AG04450 (cell line): ENCODE measurements at regions of chr9 and their contacts with region 1.

Region 1: DNA sequence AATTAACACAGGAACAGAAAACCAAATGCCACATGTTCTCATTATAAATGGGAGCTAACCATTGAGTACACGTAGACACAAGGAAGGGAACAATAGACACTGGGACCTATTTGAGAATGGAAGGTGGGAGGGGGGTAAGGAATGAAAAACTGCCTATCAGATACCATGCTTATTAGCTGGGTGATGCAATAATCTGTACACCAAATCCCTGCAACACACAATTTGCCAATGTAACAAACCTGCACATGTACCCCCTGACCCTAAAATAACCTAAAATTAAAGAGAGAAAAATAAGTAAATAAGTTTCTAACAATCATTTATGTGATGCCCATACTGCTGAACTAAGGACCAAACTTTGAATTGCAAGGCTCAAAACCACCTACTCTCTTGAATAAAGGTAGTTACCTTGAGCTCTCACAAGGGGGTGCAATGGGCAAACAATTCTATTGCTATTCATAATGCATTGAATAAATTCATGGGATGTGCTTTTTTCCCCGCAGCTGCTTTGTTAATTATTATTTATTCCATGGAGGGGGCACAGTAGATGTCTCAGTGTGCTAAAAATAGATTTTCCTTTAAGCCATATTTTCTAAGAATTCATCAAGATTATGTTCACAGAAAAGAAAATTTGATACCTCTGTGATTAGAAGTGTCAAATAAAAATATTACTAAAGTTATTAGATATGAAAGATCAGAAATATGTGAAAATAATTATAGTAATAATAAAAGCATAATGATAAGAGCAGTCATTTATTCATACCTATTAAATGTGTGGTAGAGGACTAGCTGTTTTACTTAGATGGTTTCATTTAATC is 76.2 kb upstream of the PTPN3 start:
- DNase-seq: peak; percentile 18
- H3K4me3 ChIP-seq: no peak overlapping the region
- H3K27ac ChIP-seq: no peak overlapping the region
- H3K27me3 ChIP-seq: peaks cover 5% of the 10 kb centered on the region
- CTCF ChIP-seq: peak; percentile 73

Region 2: DNA sequence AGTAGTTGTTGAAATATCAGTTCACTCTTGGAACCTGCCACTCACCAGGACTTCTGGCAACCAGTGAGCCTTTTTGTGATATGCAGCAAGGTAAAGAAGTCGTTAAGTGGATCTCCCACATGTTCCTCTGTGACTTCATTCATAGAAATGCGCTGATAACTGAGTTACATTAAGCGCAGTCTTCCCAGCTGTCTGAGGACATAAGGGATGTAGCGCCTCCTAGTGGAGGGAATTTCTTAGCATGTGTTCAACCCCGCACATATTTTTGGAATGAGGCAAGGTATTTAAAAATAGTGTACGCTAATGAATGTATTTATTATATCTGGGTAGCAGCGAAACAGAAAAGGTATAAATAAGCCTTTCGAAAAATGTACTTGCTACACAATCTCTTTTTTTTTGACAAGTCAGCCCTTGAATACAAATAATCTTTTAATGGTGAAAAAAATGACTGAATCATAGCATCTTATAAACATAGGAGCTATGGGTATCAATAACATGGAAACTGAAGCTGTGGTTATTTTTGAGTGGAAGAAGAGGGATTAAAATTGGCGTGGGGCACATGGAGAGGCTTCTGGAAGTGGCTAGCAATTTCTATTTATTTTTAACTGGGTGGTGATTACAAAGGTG is 243.7 kb after region 1 on chr9:
- CTCF ChIA-PET with region 1: interaction called, 64 read pairs
- POLR2A ChIA-PET with region 1: no interaction called
- DNase-seq: peak; percentile 97
- H3K4me3 ChIP-seq: peak overlapping the region; percentile 15; the same call in 1 of the 2 replicates
- H3K27ac ChIP-seq: peak overlapping the region; percentile 77
- H3K27me3 ChIP-seq: no peaks in the 10 kb centered on the region
- CTCF ChIP-seq: peak; percentile 72

Region 3: GRCh38 chr9:109887079-109887478 is 312.8 kb after region 1 on chr9:
- CTCF ChIA-PET with region 1: interaction called, 24 read pairs
- POLR2A ChIA-PET with region 1: no interaction called
- DNase-seq: no peak
- H3K4me3 ChIP-seq: no peak overlapping the region
- H3K27ac ChIP-seq: no peak overlapping the region
- H3K27me3 ChIP-seq: no peaks in the 10 kb centered on the region
- CTCF ChIP-seq: no peak